ENCODE measurements at regions of chr5 and their contacts with region 1.

Region 1: GRCh38 chr5:142713121-142713706 is 27.3 kb upstream of the FGF1 start:
- DNase-seq: peak; percentile 68 to 88 (median 82)
- H3K4me3 ChIP-seq: peak overlapping the region; percentile 39 to 91 (median 64)
- H3K27ac ChIP-seq: peak overlapping the region in 57 of 59 donors; percentile 31 to 96 (median 81)
- H3K27me3 ChIP-seq: no peaks in the 10 kb centered on the region
- CTCF ChIP-seq: peak; percentile 89 to 100 (median 98)

Region 2: DNA sequence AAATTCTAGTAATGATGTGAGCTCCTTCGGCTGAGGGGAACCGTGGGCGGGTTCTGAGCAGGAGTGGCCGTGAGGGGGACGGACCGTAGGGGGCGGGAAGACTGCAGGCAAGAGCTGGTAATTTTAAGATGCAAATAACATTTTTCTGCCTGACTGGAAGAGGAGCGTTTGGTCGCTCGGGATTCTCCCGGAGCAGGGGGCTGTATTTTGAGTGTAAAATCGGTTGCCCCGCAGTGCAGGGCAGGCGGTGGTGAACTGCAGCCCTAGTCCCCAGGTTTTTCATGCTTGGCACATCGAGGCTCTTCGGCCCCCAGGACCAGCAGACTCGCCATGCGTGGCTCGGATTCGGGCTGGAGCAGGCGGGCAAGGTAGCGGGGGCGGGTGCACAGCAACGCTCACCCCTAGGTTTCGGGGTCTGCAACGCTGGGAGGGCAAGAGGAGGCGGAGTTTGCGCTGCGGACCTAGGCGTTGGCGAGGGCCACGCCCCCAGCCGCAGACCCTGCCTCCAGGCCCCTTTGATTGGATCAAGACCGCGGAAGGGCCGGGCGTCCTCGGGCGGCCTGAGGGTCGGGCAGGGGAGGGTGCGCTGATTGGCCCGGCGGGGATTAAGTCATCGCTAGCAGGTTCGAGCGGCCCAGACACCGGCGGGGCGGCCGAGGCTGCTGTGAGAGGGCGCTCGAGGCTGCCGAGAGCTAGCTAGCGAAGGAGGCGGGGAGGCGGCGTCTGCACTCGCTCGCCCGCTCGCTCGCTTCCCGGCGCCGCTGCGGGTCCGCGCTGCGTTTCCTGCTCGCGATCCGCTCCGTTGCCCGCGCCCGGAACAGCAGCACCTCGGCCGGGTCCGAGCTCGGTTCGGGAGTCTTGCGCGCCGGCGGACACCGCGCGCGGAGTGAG is 56.8 kb after region 1 on chr5 and contains the start of gene ARHGAP26:
- intact Hi-C with region 1: loop called (anchors 2 kb)
- DNase-seq: peak; percentile 93 to 100 (median 98)
- H3K4me3 ChIP-seq: peak within 1 kb of the TSS; percentile 47 to 97 (median 88)
- H3K27ac ChIP-seq: peak within 1 kb of the TSS; percentile 53 to 96 (median 89)
- H3K27me3 ChIP-seq: no peaks in the 10 kb centered on the region
- CTCF ChIP-seq: peak in 43 of 56 donors; percentile 6 to 71 (median 39)
- total RNA-seq, gene ARHGAP26: 84.5 to 257 (median 180) TPM

Region 3: GRCh38 chr5:142881076-142881783 is 168.0 kb after region 1 on chr5:
- intact Hi-C with region 1: loop called (anchors 2 kb)
- DNase-seq: peak in 1 of 10 donors; percentile 46
- H3K4me3 ChIP-seq: no peak overlapping the region
- H3K27ac ChIP-seq: peak overlapping the region in 42 of 59 donors; percentile 1 to 73 (median 43)
- H3K27me3 ChIP-seq: no peaks in the 10 kb centered on the region
- CTCF ChIP-seq: no peak

Measured in dorsolateral prefrontal cortex (tissue), 120 donors.